Heart left ventricle (tissue), 16 donors: ENCODE measurements at regions of chr3 and their contacts with region 1.

Region 1: DNA sequence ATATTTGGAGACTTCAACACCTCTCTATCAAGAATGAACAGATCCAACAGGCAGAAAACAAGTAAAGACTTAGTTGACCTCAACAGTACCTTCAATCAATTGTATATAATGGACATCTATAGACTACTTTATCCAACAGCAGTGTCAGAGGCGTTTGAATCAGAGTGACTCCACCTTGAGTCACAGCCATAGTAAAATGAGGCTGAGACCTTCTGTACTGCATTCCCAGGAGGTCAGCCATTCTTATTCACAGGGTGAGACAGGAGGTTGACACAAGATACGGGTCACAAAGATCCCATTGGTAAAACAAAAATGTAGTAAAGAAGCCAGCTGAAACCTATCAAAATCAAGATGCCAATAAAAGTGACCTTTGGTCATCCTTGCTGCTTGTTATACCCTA is 299.8 kb downstream of the CNTN3 start:
- DNase-seq: no peak
- ATAC-seq: no peak
- H3K4me3 ChIP-seq: no peak overlapping the region
- H3K27ac ChIP-seq: no peak overlapping the region
- H3K4me1 ChIP-seq: no peaks in the 10 kb centered on the region
- H3K27me3 ChIP-seq: no peaks in the 10 kb centered on the region
- CTCF ChIP-seq: no peak
- POLR2A ChIP-seq: no peak

Region 2: GRCh38 chr3:74253570-74253969 is 61.1 kb before region 1 on chr3:
- intact Hi-C with region 1: loop called in 1 of 10 experiments (anchors 10 kb)
- DNase-seq: no peak
- ATAC-seq: no peak
- H3K4me3 ChIP-seq: no peak overlapping the region
- H3K27ac ChIP-seq: no peak overlapping the region
- H3K4me1 ChIP-seq: no peaks in the 10 kb centered on the region
- H3K27me3 ChIP-seq: no peaks in the 10 kb centered on the region
- CTCF ChIP-seq: no peak
- POLR2A ChIP-seq: no peak